CD8-positive, alpha-beta T cell (primary cell): ENCODE measurements at regions of chr11 and their contacts with region 1.

Region 1: GRCh38 chr11:46367244-46367915 is 14.1 kb upstream of the MDK start:
- DNase-seq: peak; percentile 54 to 90 (median 81)
- ATAC-seq: peak; percentile 96
- H3K4me3 ChIP-seq: no peak overlapping the region
- H3K4me3 Mint-ChIP-seq: no peak overlapping the region
- H3K27ac ChIP-seq: no peak overlapping the region
- H3K27ac Mint-ChIP-seq: no peak overlapping the region
- H3K4me1 ChIP-seq: peaks cover 50% of the 10 kb centered on the region
- H3K4me1 Mint-ChIP-seq: peaks cover 43% of the 10 kb centered on the region
- H3K27me3 ChIP-seq: no peaks in the 10 kb centered on the region
- H3K27me3 Mint-ChIP-seq: no peaks in the 10 kb centered on the region
- CTCF ChIP-seq: peak; percentile 72

Region 2: DNA sequence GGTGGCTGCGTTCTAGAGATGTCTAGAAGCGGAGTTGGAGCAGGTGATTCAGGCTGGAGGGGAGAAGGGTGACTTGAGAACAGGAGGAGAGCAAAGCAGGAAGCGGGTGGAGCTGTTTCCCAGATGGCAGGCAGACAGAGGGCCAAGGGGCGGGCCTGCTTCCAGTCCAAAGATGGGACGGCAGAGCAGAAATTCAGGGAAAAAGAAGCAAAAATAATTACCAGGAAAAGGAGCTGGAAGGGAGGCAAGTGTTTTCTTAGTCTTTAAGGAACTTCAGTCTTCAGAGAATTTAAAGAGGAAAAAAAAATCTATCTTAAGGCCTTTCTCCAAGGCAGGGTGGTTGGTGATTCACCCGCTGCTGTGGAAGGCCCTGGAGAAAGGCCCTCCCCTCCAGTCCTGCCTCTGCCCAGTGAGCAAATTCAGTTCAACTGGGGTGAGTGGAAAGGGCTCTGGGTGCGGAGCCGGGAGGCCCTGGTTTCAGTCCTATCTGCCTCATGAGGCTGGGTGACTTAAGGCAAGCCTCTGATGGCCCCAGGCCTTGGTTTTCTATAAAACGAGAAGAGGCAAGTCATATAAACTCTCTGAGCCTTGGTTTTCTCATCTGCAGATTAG is 94.5 kb before region 1 on chr11:
- CTCF ChIA-PET with region 1: no interaction called
- POLR2A ChIA-PET with region 1: no interaction called
- intact Hi-C with region 1: no loop called
- DNase-seq: no peak
- ATAC-seq: no peak
- H3K4me3 ChIP-seq: no peak overlapping the region
- H3K4me3 Mint-ChIP-seq: no peak overlapping the region
- H3K27ac ChIP-seq: no peak overlapping the region
- H3K27ac Mint-ChIP-seq: no peak overlapping the region
- H3K4me1 ChIP-seq: peaks cover 7% of the 10 kb centered on the region
- H3K4me1 Mint-ChIP-seq: peaks cover 6% of the 10 kb centered on the region
- H3K27me3 ChIP-seq: peaks cover 10 to 12% of the 10 kb centered on the region in 2 experiments
- H3K27me3 Mint-ChIP-seq: peaks cover 20% of the 10 kb centered on the region
- CTCF ChIP-seq: no peak

Region 3: GRCh38 chr11:46332568-46333393 is 34.6 kb before region 1 on chr11:
- CTCF ChIA-PET with region 1: interaction called, 6 read pairs
- POLR2A ChIA-PET with region 1: interaction called, 3 read pairs
- intact Hi-C with region 1: loop called in 1 of 2 experiments (anchors 1 kb)
- DNase-seq: peak in 7 of 9 experiments; percentile 36 to 71 (median 58)
- ATAC-seq: peak; percentile 32
- H3K4me3 ChIP-seq: peak overlapping the region; percentile 43 to 54
- H3K4me3 Mint-ChIP-seq: peak overlapping the region; percentile 86
- H3K27ac ChIP-seq: peak overlapping the region in 1 of 2 experiments; percentile 6
- H3K27ac Mint-ChIP-seq: peak overlapping the region; percentile 95
- H3K4me1 ChIP-seq: peaks cover 62% of the 10 kb centered on the region
- H3K4me1 Mint-ChIP-seq: peaks cover 61% of the 10 kb centered on the region
- H3K27me3 ChIP-seq: peaks cover 0 to 12% of the 10 kb centered on the region in 2 experiments
- H3K27me3 Mint-ChIP-seq: no peaks in the 10 kb centered on the region
- CTCF ChIP-seq: no peak